ENCODE measurements at regions of chr15 and their contacts with region 1.

Region 1: DNA sequence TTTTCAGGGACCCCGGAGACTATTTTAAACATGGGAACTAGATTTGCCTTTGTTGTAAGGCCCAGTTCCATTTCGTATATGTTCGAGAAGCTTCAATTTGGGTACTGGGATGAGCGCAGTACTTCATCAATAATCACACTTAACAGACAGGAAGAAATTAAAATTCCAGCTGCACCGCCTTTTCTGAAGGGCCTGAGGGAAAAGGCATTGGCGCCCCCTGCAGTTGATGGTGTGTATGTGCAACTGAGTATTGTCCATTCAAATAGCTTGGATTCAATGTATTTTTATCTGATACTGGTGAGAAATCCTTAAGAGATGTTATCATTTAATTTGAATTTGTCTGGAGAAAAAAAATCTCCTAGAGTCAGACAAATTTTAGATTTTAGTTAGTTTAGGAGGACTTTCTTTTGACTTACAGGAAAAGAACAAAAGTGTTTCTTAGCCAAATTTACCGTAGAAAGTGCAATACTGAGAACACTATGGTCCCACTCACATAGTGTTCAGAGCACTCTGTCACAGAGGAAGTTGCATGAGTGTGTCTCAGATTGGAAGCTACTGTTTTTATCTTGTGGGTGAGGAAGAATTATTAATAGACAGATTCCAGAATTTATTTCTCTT is 5.4 kb upstream of the ALDH1A2 start:
- DNase-seq: peak; percentile 44 to 77 (median 53)
- ATAC-seq: peak in 1 of 4 donors; percentile 44
- H3K4me3 ChIP-seq: no peak overlapping the region
- H3K27ac ChIP-seq: no peak overlapping the region
- H3K4me1 ChIP-seq: peaks cover 0 to 7% (median under 1%) of the 10 kb centered on the region in 12 donors
- H3K27me3 ChIP-seq: peaks cover 0 to 35% (median 3%) of the 10 kb centered on the region in 9 donors
- CTCF ChIP-seq: peak; percentile 88 to 98 (median 94)
- POLR2A ChIP-seq: no peak

Region 2: DNA sequence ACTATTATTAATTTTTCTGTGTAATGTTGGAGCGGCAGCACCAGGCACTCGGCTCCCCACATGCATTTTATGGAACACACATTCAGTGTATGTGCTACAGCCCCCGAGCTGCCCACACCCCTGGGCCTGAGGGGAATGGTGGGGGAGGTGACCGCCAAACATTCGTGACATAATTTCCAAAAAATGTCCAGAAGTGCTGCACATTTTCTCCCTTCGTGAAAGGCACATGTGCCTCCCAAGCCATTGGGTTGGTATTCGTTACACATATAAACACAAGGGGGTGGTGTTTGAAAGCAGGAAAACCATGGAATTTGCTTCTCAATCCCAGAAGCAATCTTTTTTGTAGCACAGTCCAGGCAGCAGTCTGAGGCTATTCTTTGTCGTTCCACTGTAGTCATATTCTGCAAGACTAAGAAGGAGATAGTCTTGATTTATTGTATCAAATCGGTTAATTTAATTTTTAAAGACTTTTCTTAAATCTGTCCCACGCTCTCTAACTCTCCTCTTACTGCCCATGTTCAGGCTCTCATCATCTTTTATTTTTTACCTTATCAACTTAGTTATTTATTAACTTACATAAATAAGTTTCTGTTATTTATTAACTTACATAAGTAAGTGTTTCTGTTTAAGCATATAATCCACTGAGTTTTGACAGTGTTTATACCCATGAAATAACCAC is 403.6 kb before region 1 on chr15:
- intact Hi-C with region 1: loop called in 2 of 10 experiments (anchors 5 to 10 kb)
- DNase-seq: no peak
- ATAC-seq: peak; percentile 45 to 68 (median 56)
- H3K4me3 ChIP-seq: no peak overlapping the region
- H3K27ac ChIP-seq: peak overlapping the region in 4 of 12 donors; percentile 20 to 53 (median 31)
- H3K4me1 ChIP-seq: peaks cover 0 to 37% (median 13%) of the 10 kb centered on the region in 12 donors
- H3K27me3 ChIP-seq: no peaks in the 10 kb centered on the region
- CTCF ChIP-seq: peak; percentile 8 to 66 (median 48)
- POLR2A ChIP-seq: no peak

Region 3: DNA sequence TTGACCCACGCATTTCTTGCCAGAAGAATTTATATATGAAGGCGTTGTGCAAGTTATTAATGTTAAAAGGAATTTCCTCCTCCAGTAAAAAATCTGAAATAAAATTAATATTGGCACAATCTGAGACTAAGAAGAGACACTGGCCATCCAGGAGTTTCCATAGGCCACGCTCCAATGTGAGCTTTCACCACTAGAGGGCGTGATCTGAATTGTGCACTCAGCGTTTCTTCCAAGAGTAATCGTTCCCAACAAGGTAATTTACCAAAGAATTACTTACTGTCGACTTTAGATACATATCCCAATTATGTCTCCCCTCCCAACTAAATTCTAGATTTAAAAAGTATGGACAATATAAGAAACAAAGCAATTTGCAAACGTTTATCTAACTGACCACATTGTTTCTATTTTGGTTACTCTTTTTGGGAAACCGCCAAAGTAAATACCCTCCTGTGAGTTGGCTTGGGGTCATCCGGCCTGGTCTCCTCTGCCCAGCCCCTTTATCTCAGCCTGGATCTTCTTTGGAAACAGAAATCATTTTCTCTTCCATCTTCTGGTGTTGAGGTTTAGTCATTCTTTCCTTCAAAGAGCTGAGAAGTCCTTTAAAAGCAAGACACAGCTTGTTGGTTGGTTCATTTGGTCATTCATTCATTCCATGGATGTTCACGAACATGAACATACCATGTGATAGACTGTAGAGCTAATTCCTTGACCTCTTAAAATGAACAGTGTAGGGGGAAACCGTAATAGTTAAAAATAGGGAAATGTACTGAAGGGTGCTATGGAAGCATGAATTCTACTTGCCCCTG is 338.2 kb before region 1 on chr15:
- intact Hi-C with region 1: loop called in 2 of 10 experiments (anchors 2 to 5 kb)
- DNase-seq: peak in 3 of 5 donors; percentile 35 to 52 (median 37)
- ATAC-seq: peak in 2 of 4 donors; percentile 58 to 69
- H3K4me3 ChIP-seq: no peak overlapping the region
- H3K27ac ChIP-seq: no peak overlapping the region
- H3K4me1 ChIP-seq: peaks cover 0 to 10% (median 4%) of the 10 kb centered on the region in 12 donors
- H3K27me3 ChIP-seq: no peaks in the 10 kb centered on the region
- CTCF ChIP-seq: peak; percentile 80 to 93 (median 88)
- POLR2A ChIP-seq: no peak

Region 4: GRCh38 chr15:57751177-57751800 is 319.6 kb before region 1 on chr15:
- intact Hi-C with region 1: loop called (anchors 1 to 5 kb)
- DNase-seq: no peak
- ATAC-seq: peak in 3 of 4 donors; percentile 47 to 64 (median 58)
- H3K4me3 ChIP-seq: no peak overlapping the region
- H3K27ac ChIP-seq: no peak overlapping the region
- H3K4me1 ChIP-seq: peaks cover 0 to 15% (median 0%) of the 10 kb centered on the region in 12 donors
- H3K27me3 ChIP-seq: no peaks in the 10 kb centered on the region
- CTCF ChIP-seq: peak; percentile 18 to 75 (median 62)
- POLR2A ChIP-seq: no peak

Region 5: GRCh38 chr15:57866149-57866736 is 204.7 kb before region 1 on chr15:
- intact Hi-C with region 1: loop called (anchors 1 to 5 kb)
- DNase-seq: peak; percentile 28 to 67 (median 52)
- ATAC-seq: peak in 2 of 4 donors; percentile 54 to 62
- H3K4me3 ChIP-seq: no peak overlapping the region
- H3K27ac ChIP-seq: no peak overlapping the region
- H3K4me1 ChIP-seq: peaks cover 0 to under 1% (median 0%) of the 10 kb centered on the region in 12 donors
- H3K27me3 ChIP-seq: peaks cover 0 to 6% (median 0%) of the 10 kb centered on the region in 9 donors
- CTCF ChIP-seq: peak; percentile 64 to 85 (median 80)
- POLR2A ChIP-seq: no peak

Region 6: GRCh38 chr15:58021332-58022230 is 49.3 kb before region 1 on chr15:
- intact Hi-C with region 1: no loop called
- DNase-seq: peak in 1 of 5 donors; percentile 28
- ATAC-seq: peak in 1 of 4 donors; percentile 42
- H3K4me3 ChIP-seq: no peak overlapping the region
- H3K27ac ChIP-seq: no peak overlapping the region
- H3K4me1 ChIP-seq: no peaks in the 10 kb centered on the region
- H3K27me3 ChIP-seq: no peaks in the 10 kb centered on the region
- CTCF ChIP-seq: no peak
- POLR2A ChIP-seq: no peak

Region 7: DNA sequence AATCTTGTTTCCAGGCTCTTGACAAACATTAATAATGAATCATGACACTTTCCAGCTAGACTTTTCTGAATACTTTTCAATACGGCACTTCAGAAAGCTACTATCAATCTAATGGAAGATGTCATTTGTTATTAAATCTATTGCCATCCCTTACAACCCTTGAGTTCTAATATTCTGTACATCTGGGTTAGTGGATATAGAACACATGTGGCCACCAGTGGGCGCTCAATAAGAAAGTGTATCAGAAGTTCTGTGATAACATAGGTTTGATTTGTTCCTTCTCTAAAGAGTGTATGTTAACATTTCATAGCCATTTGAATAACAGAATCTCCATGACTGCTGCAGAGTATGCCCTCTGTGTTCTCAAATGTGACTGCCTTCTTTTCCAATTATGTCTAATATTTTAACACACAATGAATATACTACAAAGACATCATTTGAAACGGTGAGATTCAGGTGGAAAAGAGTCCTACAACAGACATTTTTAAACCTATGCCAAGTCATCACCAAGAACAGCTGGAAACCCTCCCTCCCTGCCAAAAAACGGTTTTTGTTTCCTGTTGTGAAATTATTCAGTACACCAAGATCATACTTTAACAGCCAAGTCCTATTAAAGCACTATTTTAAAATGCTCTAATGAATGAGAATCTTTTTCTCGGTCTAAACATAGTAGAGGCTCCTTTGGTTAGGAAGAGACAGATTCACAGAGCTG is 27.6 kb before region 1 on chr15:
- intact Hi-C with region 1: loop called in 1 of 10 experiments (anchors 2 kb)
- DNase-seq: peak in 4 of 5 donors; percentile 28 to 52 (median 36)
- ATAC-seq: peak in 2 of 4 donors; percentile 29 to 53
- H3K4me3 ChIP-seq: no peak overlapping the region
- H3K27ac ChIP-seq: no peak overlapping the region
- H3K4me1 ChIP-seq: peaks cover 0 to 19% (median 4%) of the 10 kb centered on the region in 12 donors
- H3K27me3 ChIP-seq: no peaks in the 10 kb centered on the region
- CTCF ChIP-seq: peak; percentile 31 to 75 (median 55)
- POLR2A ChIP-seq: no peak